ENCODE measurements at regions of chr17 and their contacts with region 1.

Region 1: DNA sequence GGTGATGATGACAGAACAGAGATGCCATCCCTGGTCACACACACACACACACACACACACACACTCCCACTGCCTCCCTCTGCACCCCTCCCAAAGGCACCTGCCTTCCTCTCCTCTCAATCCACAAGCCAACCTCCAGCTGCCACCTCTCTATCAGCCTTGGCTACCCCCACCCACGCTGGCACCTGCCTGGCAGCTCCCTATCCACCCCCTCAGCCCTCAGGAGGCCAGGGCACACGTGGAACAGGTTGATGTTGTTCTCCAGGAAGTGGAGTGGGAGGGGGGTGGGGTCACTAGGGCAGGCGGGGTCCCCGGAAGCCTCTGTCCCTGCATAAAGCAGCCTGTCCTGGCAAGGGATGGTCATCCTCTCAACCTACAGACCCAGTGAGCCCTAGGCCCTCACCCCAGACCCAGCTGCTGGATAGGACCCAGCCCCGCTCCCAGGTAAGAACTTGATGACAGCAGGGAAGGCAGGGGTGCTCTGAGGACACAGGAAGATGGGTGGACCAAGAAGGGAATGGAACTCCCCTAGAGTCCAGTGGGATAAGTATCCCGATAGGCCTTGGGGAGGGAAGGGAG is at the start of gene GSDMA:
- DNase-seq: no peak
- H3K4me3 ChIP-seq: no peak within 1 kb of the TSS
- H3K4me3 Mint-ChIP-seq: peak within 1 kb of the TSS in 4 of 7 donors; percentile 8 to 61 (median 41)
- H3K27ac ChIP-seq: no peak within 1 kb of the TSS
- H3K27ac Mint-ChIP-seq: peak within 1 kb of the TSS in 7 of 8 donors; percentile 0 to 89 (median 48)
- H3K4me1 ChIP-seq: peaks cover 27% of the 10 kb centered on the region
- H3K4me1 Mint-ChIP-seq: peaks cover 18 to 47% (median 37%) of the 10 kb centered on the region in 3 donors
- H3K27me3 ChIP-seq: no peaks in the 10 kb centered on the region
- H3K27me3 Mint-ChIP-seq: peaks cover 2 to 12% of the 10 kb centered on the region in 2 donors
- total RNA-seq, gene GSDMA: not detected

Region 2: DNA sequence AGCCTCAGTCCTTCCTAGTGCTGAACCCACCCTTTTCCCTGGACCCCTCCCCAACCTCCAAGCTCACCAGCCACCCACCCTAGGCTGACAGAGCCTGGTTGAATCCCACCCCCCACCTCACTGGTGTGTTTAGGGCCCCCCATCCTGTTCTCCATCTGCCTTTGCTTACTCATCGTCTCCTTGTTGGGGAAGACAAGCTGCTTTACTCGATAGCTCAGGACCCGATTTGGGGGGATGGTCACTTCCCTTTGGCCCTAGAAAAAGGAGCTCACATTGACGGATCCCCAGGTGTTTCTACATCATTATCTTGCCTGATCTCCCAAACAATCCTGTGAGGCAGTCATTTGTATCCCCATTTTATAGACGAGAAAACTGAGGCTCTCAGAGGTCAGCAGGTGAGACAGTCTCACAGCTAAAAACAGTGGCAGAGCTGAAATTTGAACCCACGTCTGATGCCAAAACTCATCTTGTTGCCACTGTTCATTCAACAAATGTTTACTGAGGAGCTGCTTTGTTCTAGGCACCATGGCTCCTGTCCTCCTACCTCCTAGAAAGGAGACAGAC is 53.9 kb before region 1 on chr17:
- CTCF ChIA-PET with region 1: interaction called, 5 read pairs
- POLR2A ChIA-PET with region 1: interaction called, 16 read pairs
- DNase-seq: no peak
- H3K4me3 ChIP-seq: no peak overlapping the region
- H3K4me3 Mint-ChIP-seq: no peak overlapping the region
- H3K27ac ChIP-seq: no peak overlapping the region
- H3K27ac Mint-ChIP-seq: peak overlapping the region in 2 of 8 donors; percentile 4 to 5
- H3K4me1 ChIP-seq: peaks cover 1% of the 10 kb centered on the region
- H3K4me1 Mint-ChIP-seq: peaks cover 7 to 10% (median 8%) of the 10 kb centered on the region in 3 donors
- H3K27me3 ChIP-seq: no peaks in the 10 kb centered on the region
- H3K27me3 Mint-ChIP-seq: no peaks in the 10 kb centered on the region

Region 3: DNA sequence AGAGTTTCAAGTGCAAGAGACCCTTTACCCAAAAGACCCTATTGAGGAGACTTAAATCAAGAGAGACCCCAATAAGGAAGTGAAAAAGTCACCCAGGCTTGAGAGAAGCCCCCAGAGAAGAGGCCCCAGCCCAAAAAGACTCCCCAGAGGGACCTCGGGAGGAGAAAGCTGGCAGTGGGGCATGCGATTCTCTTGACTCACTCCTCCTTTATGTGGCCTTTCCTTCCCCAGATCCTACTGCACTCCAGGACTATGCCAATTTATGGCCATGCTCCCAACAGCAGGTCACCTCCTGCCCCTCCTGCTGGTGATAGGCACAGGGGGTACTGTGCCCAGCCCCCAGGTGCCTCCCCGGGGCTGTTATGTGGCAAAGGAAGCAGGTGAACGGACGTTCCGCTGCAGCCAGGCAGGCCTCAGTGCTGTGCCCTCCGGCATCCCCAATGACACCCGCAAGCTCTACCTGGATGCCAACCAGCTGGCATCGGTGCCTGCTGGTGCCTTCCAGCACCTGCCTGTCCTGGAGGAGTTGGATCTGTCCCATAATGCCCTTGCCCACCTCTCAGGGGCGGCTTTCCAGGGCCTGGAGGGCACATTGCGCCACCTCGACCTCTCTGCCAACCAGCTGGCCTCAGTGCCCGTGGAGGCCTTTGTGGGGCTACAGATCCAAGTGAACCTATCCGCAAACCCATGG is 18.9 kb before region 1 on chr17:
- CTCF ChIA-PET with region 1: no interaction called
- POLR2A ChIA-PET with region 1: no interaction called
- DNase-seq: no peak
- H3K4me3 ChIP-seq: no peak overlapping the region
- H3K4me3 Mint-ChIP-seq: no peak overlapping the region
- H3K27ac ChIP-seq: no peak overlapping the region
- H3K27ac Mint-ChIP-seq: no peak overlapping the region
- H3K4me1 ChIP-seq: peaks cover 9% of the 10 kb centered on the region
- H3K4me1 Mint-ChIP-seq: peaks cover 7 to 20% (median 11%) of the 10 kb centered on the region in 3 donors
- H3K27me3 ChIP-seq: no peaks in the 10 kb centered on the region
- H3K27me3 Mint-ChIP-seq: peaks cover 0 to 4% of the 10 kb centered on the region in 2 donors

Region 4: DNA sequence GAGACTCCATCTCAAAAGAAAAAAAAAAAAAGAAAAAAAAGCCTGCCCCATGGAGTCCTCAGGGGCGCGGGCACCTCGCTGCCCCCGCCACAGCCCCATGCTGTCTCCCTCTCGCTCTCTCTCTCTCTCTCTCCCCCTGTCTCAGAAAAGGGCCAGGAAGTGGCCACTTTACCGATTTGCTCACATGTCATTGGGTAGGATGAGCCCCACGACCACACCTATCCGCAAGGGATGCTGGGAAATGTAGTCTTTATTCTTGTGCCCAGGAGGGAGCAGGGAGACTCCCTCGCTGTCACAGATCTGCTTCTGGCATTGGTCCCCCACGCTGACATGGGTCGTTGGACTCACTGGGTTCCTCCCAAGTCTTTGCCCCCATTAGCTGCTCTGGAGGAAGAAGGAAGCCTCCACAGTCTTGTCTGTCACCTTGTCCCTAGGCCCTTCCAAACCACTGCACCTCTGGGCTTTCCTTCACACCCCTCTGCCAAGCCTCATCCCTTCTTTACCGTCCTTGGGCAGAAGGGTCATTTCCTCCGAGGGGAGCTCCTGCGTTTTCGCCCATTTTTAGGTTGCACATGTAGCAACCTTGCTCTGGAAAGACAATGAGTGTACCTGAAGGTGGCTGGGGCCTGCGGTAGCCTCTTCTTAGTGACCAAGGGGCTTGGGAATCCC is 408.7 kb after region 1 on chr17:
- CTCF ChIA-PET with region 1: no interaction called
- POLR2A ChIA-PET with region 1: no interaction called
- DNase-seq: peak in 2 of 5 donors; percentile 28 to 40
- H3K4me3 ChIP-seq: no peak overlapping the region
- H3K4me3 Mint-ChIP-seq: peak overlapping the region in 2 of 7 donors; percentile 16 to 43
- H3K27ac ChIP-seq: no peak overlapping the region
- H3K27ac Mint-ChIP-seq: peak overlapping the region in 2 of 8 donors; percentile 68 to 75
- H3K4me1 ChIP-seq: no peaks in the 10 kb centered on the region
- H3K4me1 Mint-ChIP-seq: peaks cover 3 to 6% (median 4%) of the 10 kb centered on the region in 3 donors
- H3K27me3 ChIP-seq: no peaks in the 10 kb centered on the region
- H3K27me3 Mint-ChIP-seq: peaks cover under 1 to 4% of the 10 kb centered on the region in 2 donors

Measured in CD8-positive, alpha-beta memory T cell (primary cell).